ENCODE measurements at regions of chr3 and their contacts with region 1.

Region 1: GRCh38 chr3:192957441-192958021 is 39.9 kb upstream of the MB21D2 start:
- DNase-seq: peak in 1 of 5 donors; percentile 59
- H3K4me3 ChIP-seq: no peak overlapping the region
- H3K27ac ChIP-seq: no peak overlapping the region
- H3K4me1 ChIP-seq: no peaks in the 10 kb centered on the region
- H3K27me3 ChIP-seq: no peaks in the 10 kb centered on the region
- CTCF ChIP-seq: no peak
- EP300 ChIP-seq: no peak
- POLR2A ChIP-seq: no peak

Region 2: DNA sequence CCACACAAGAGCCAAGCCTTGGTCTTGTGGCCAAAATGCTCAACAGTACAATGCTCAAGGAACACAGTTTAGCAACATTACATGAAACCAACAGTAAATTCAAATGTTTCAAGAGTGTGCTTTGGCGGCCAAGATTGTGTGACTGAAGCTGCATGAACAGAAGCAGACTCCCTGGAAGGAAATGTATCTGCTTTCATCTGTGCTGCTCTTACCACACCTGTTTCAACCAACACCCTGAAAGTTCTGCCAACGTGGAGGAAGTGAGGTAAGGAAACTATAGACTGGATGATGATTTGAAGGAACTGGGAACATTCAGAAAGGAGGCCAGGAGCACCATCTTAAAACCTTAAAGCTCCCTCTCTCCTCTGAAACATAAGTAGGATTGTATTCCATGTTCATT is 95.6 kb before region 1 on chr3:
- intact Hi-C with region 1: no loop called
- DNase-seq: no peak
- H3K4me3 ChIP-seq: no peak overlapping the region
- H3K27ac ChIP-seq: no peak overlapping the region
- H3K4me1 ChIP-seq: peaks cover 3% of the 10 kb centered on the region
- H3K27me3 ChIP-seq: no peaks in the 10 kb centered on the region
- CTCF ChIP-seq: no peak
- EP300 ChIP-seq: no peak
- POLR2A ChIP-seq: no peak

Region 3: DNA sequence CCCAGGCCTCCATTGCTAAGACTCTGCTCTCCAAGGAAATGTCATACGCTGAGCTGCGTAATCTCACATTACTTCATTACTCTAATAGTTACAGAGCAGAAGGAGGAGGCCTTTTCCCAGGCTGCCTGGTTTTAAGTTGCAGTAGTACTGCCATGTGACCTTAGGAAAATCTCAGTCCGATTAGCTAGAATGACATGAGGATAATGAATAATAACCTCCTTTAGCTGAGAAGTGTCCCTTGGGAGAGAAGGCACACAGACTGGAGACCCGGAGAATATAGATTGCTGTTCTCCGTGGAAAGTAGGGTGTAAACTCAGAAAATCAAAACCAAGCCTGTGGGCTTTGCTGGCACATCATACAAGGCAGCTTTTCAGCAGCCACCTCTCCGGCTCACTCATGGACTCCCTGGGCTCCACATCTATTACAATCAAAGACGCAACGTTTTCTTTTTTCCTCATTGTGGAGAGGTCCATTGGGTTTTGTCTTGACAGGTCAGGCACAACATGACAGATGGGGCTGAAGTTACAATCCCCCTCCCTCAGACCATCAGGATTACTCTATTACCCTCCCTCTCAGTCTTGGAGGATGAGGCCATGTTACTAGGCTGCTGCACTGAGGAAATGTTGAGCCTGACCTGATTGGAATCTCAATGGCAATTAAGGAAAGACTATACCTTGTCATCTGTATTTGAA is 95.0 kb after region 1 on chr3:
- intact Hi-C with region 1: loop called in 1 of 4 experiments (anchors 10 kb)
- DNase-seq: no peak
- H3K4me3 ChIP-seq: no peak overlapping the region
- H3K27ac ChIP-seq: no peak overlapping the region
- H3K4me1 ChIP-seq: no peaks in the 10 kb centered on the region
- H3K27me3 ChIP-seq: no peaks in the 10 kb centered on the region
- CTCF ChIP-seq: no peak
- EP300 ChIP-seq: no peak
- POLR2A ChIP-seq: no peak

Measured in ovary (tissue), 10 donors.